Naive thymus-derived CD4-positive, alpha-beta T cell (primary cell): ENCODE measurements at regions of chr1 and their contacts with region 1.

Region 1: DNA sequence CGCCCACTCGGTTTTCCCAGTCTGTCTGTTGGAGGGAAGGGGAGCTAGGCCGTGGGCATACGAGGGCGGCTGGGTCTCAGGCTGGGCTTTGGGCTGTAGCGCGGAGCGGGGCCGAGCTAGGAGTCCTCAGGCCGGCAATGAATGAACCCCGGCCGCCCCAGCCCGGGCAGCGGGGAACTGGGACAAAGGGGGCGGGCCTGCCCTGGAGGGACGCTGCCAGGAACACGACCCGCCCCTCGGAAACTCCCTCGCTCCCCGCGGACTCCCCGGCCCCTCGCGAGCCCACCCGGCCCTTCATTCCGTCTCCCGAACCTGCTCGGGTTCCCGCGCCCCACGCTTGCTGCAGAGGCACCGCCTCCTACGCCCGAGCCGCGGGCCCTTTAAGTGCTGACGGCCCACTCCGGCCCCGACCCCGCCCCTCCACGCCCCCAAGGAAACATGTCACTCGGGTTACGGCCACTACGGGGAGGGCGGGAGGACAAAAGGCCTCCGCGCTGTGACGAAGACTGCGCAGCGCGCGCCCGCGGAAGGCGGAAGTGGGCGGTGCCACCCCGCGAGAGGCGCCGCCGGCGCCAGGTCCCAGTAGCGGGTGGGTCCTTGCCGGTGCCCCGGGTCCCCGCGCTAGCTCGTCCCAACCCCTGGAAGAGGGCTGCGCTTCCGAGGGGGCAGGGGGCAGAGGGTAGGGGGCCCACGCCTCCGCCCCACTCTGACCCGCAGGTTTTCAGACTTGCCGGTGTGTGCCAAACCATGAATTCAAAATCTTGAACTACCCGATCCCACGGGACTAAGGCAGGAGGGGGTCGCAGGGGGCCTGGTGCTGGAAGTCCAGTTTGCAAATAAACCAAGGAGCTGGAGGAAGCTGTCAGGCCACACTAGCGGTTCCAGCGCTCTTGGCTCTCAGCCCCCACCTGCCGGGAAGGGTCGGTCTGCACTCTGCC is at the start of gene GALE:
- DNase-seq: peak; percentile 87 to 96 (median 94)
- ATAC-seq: peak; percentile 97
- H3K4me3 ChIP-seq: peak within 1 kb of the TSS; percentile 84
- H3K4me3 Mint-ChIP-seq: peak within 1 kb of the TSS; percentile 79 to 94 (median 88)
- H3K27ac ChIP-seq: peak within 1 kb of the TSS; percentile 91
- H3K27ac Mint-ChIP-seq: peak within 1 kb of the TSS; percentile 81 to 95 (median 92)
- H3K4me1 ChIP-seq: peaks cover 7 to 15% of the 10 kb centered on the region in 2 donors
- H3K4me1 Mint-ChIP-seq: peaks cover 6 to 25% (median 15%) of the 10 kb centered on the region in 7 donors
- H3K27me3 ChIP-seq: no peaks in the 10 kb centered on the region
- H3K27me3 Mint-ChIP-seq: no peaks in the 10 kb centered on the region
- total RNA-seq, gene GALE: 8.1 to 21.4 (median 12.7) TPM

Region 2: GRCh38 chr1:23743287-23744052 is 57.2 kb before region 1 on chr1 and contains the start of gene ELOA:
- CTCF ChIA-PET with region 1: no interaction called
- POLR2A ChIA-PET with region 1: interaction called, 5 read pairs
- intact Hi-C with region 1: loop called (anchors 1 to 2 kb)
- DNase-seq: peak; percentile 68 to 84 (median 77)
- ATAC-seq: peak; percentile 98
- H3K4me3 ChIP-seq: peak within 1 kb of the TSS; percentile 87
- H3K4me3 Mint-ChIP-seq: peak within 1 kb of the TSS; percentile 90 to 93 (median 92)
- H3K27ac ChIP-seq: peak within 1 kb of the TSS; percentile 96
- H3K27ac Mint-ChIP-seq: peak within 1 kb of the TSS; percentile 80 to 95 (median 91)
- H3K4me1 ChIP-seq: peaks cover 22 to 39% of the 10 kb centered on the region in 2 donors
- H3K4me1 Mint-ChIP-seq: peaks cover 35 to 52% (median 49%) of the 10 kb centered on the region in 7 donors
- H3K27me3 ChIP-seq: no peaks in the 10 kb centered on the region
- H3K27me3 Mint-ChIP-seq: no peaks in the 10 kb centered on the region
- total RNA-seq, gene ELOA: 28.0 to 36.1 (median 30.4) TPM

Region 3: DNA sequence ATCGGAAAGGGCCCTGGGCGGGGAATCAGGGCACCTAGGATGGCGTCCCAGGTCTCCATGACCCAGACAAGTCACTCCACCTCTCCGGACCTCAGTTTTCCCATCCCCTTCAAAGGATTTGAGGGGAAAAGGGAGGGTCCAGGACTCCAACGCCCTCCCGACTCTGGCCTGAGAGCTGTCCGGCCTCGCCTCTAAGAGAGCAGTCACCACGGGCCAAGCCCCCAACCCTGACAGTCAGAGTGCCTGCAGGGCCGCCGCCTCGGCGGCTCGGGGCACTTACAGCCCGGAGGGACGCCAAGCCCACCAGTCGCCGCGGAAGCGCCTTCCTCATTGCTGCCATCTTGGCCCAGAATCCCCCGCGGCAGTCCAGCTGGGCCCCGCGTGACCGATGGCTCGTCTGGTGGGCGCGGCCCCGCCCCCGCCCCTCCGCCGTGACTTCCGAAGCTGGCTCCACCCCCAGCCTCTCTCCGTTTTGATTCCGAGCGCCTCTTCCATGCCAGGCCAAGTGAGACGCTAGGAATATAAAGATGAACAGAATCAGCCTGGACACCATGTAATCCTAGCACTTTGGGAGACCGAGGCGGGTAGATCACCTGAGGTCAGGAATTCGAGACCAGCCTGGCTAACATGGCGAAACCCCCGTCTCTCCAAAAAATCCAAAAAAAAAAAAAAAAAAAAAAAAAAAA is 24.6 kb after region 1 on chr1 and contains the start of gene HMGCL:
- CTCF ChIA-PET with region 1: no interaction called
- POLR2A ChIA-PET with region 1: interaction called, 41 read pairs
- intact Hi-C with region 1: loop called in 1 of 2 experiments (anchors 1 kb)
- DNase-seq: peak; percentile 64 to 89 (median 81)
- ATAC-seq: peak; percentile 99
- H3K4me3 ChIP-seq: peak within 1 kb of the TSS; percentile 95
- H3K4me3 Mint-ChIP-seq: peak within 1 kb of the TSS; percentile 86 to 96 (median 94)
- H3K27ac ChIP-seq: peak within 1 kb of the TSS; percentile 95
- H3K27ac Mint-ChIP-seq: peak within 1 kb of the TSS; percentile 76 to 98 (median 96)
- H3K4me1 ChIP-seq: peaks cover 6% of the 10 kb centered on the region in 2 donors
- H3K4me1 Mint-ChIP-seq: peaks cover 11 to 33% (median 20%) of the 10 kb centered on the region in 7 donors
- H3K27me3 ChIP-seq: no peaks in the 10 kb centered on the region
- H3K27me3 Mint-ChIP-seq: peaks cover 0 to 5% (median 0%) of the 10 kb centered on the region in 5 donors
- total RNA-seq, gene HMGCL: 16.2 to 38.9 (median 27.3) TPM

Region 4: DNA sequence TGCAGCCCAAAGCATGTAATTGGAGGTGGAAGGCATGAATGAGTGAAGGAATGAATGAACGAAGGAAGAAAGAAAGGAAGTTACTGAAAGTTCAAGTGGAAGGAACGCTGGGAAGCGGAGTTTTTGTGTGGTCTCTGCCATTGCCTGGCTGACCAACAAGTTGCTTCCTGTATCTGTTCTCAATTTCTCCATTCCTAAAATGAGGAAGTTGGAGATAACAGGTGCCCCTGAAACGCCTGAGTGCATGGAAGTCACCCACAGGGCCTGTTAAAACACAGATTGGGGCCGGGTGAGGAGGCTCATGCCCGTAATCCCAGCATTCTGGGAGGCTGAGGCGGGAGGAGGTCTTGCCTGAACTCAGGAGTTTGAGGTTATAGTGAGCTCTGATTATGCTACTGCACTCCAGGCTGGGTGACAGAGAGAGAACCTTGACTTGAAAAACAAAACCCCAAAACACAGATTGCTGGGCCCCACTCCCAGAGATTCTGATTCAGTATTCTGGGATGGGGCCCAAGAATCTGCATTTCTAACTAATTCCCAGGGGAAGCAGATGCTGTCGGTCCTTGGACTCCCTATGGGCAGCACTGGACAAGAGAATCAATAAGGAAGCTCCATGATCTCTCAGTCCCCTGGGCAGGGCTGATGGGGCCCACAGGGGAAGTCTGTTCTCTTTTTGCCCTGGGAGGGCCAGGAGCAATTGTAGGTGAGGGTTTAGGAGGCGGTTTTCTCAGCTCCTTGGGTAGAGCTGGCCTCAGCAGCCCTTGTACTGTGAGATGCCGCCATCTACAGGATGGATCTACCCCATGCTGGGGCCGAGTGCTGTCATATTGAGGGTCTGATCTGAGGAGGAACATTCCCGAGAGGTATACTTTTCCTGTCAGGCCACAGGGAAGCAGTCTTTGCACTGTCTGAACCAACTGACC is 115.8 kb after region 1 on chr1:
- CTCF ChIA-PET with region 1: interaction called, 14 read pairs
- POLR2A ChIA-PET with region 1: interaction called, 3 read pairs
- intact Hi-C with region 1: no loop called
- DNase-seq: peak; percentile 24 to 66 (median 55)
- ATAC-seq: peak; percentile 95
- H3K4me3 ChIP-seq: no peak overlapping the region
- H3K4me3 Mint-ChIP-seq: no peak overlapping the region
- H3K27ac ChIP-seq: no peak overlapping the region
- H3K27ac Mint-ChIP-seq: peak overlapping the region in 2 of 9 donors; percentile 64 to 72
- H3K4me1 ChIP-seq: peaks cover 7 to 8% of the 10 kb centered on the region in 2 donors
- H3K4me1 Mint-ChIP-seq: peaks cover 10 to 41% (median 30%) of the 10 kb centered on the region in 7 donors
- H3K27me3 ChIP-seq: no peaks in the 10 kb centered on the region
- H3K27me3 Mint-ChIP-seq: peaks cover 0 to 2% (median 0%) of the 10 kb centered on the region in 5 donors